ENCODE measurements at regions of chr11 and their contacts with region 1.

Region 1: GRCh38 chr11:3217676-3218482 is 734 bp downstream of the MRGPRG start:
- DNase-seq: peak; percentile 17
- ATAC-seq: peak in 1 of 2 donors; percentile 9

Region 2: DNA sequence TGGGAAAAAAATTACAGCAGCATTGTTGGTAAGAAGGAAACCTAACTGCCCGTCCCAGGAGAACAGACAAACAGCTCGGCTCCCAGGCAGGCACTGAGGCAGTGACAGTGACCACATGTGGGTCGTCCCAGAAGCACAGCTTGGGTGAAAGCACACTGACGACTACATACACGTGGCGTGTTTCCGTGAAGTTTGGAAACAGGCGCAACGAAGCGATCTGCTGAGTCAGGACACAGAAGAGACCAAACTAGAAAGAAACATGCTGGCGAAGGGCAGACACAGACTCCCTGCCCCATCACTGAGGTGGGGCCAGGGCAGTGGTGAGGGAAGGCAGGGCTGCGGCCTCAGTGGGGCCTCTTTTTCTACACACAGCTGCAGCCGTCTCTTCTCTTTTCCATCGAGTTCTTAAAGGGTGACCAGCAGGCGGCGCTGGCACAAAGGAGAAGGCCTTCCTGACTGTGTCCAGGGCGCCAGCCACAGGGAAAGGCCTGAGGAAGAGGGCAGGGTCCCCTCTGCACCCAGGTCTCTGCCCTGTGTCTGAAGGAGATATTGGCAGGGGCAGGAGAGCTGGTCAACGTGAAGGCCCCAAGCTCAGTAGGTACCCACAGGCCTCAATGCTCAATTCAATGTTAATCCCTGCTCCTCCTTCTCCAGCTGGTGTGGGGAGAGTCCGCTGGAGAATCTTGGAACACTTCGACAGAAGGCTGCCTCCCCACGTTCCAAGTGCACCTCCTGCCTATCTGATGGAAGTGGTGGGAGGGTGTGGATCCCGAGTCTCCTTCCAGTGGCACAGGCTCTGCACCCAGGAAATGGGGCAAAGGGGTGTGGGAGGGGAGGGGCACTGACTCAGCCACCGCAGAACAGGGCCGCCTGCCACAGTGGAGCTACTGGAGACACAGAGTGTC is 180.6 kb before region 1 on chr11:
- intact Hi-C with region 1: loop called (anchors 5 kb)
- DNase-seq: peak; percentile 87
- ATAC-seq: peak; percentile 76 to 82

Region 3: GRCh38 chr11:3109921-3110706 is 107.8 kb before region 1 on chr11:
- intact Hi-C with region 1: loop called in 1 of 2 experiments (anchors 5 kb)
- DNase-seq: no peak
- ATAC-seq: peak; percentile 66 to 75

Region 4: DNA sequence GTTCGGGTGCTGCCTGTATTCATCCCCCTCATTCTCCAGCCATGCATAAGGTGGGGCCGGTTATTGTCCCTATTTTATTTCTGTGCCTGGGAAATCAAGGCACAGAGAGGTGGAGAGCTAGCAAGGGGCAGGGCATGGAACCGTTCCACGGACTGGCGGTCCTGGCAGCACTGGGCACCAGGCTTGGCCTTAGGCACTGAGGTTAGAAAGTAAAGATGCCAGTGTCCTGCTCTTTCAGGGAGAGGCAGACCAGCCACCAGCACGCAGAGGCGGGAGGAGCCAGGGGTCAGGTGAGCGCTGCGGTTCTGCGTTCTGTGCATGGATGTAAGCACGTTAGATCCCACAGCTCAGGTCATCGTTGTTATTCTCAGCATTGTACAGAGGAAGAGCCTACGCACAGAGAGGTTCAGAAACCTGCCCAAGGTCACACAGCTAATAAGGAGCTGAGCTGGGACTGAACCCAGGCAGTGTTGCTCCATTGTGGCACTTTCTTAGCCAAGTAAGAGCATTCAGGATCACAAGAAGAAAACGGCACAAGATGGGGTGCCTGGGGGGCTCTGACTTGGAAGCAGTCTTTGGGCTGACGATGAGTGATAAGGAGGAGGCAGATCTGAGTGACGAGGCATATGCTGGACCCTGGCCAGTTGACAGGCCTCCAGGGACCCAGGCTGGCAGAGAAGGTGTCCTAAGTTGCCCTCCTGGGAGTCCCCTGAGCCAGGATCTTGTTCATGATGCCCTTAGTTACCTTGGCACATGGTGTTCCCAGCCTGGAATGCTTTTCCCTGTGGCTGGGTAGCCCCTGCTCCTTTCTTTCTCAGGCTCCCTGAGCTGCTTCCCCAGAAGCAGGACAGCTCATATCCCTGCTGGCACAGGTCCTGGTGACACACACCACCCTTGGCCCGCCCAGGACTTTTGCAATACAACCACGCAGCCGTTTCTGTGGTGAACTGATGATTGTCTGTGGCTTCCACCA is 93.8 kb before region 1 on chr11:
- intact Hi-C with region 1: no loop called
- DNase-seq: peak; percentile 90
- ATAC-seq: peak; percentile 69 to 85

Region 5: GRCh38 chr11:3160252-3161031 is 57.4 kb before region 1 on chr11:
- intact Hi-C with region 1: no loop called
- DNase-seq: peak; percentile 92
- ATAC-seq: peak; percentile 81 to 84